ENCODE measurements at regions of chr12 and their contacts with region 1.

Region 1: DNA sequence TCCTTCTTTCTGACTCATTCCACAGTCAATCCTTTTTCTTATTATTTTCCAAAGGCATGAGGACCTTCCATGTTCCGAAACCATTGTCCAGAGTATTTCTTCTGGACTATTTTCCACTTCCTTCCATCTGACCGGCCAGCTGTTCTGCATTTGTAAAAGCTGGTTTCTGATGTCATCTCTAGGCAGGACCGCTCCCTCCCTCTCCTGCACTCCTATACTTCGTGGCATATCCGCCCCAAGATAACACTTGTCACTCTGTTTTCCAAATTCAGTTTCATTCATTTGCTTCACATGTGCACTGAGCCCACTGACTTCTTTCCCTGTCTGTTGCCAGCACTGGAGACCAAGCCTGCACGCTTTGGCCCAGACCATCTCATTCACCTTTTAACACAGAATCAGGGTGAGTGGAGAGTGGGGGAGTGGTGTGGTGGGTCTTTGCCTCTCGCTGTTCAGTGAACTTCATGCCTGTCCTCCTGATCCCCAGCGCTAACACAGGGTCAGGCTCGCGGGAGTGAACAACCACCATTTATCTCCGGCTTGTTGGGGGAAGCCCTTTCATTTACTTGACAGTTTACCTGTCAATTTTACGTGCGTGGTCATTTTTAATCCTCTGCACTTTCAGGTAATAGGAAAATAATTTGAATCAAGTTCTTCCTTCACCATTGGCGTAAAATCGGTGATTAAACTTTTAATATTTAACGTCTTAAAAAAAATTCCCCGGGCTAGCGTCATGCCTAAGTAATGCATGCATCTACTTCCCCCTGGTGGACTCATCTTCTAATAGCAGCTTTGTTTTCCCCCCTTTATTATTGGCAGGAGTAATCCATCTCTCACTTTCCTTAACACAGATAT is 52.5 kb downstream of the C12orf75 start:
- DNase-seq: peak in 4 of 5 donors; percentile 49 to 56 (median 54)
- H3K4me3 ChIP-seq: no peak overlapping the region
- H3K4me3 Mint-ChIP-seq: peak overlapping the region in 1 of 8 donors; percentile 6
- H3K27ac ChIP-seq: no peak overlapping the region
- H3K27ac Mint-ChIP-seq: no peak overlapping the region
- H3K4me1 ChIP-seq: peaks cover 4% of the 10 kb centered on the region
- H3K4me1 Mint-ChIP-seq: no peaks in the 10 kb centered on the region
- H3K27me3 ChIP-seq: no peaks in the 10 kb centered on the region
- H3K27me3 Mint-ChIP-seq: no peaks in the 10 kb centered on the region

Region 2: GRCh38 chr12:105157606-105158005 is 225.4 kb before region 1 on chr12:
- CTCF ChIA-PET with region 1: no interaction called
- POLR2A ChIA-PET with region 1: no interaction called
- intact Hi-C with region 1: loop called (anchors 2 kb)
- DNase-seq: no peak
- H3K4me3 ChIP-seq: no peak overlapping the region
- H3K4me3 Mint-ChIP-seq: no peak overlapping the region
- H3K27ac ChIP-seq: no peak overlapping the region
- H3K27ac Mint-ChIP-seq: peak overlapping the region in 2 of 7 donors; percentile 22 to 32
- H3K4me1 ChIP-seq: no peaks in the 10 kb centered on the region
- H3K4me1 Mint-ChIP-seq: peaks cover 0 to 8% (median 2%) of the 10 kb centered on the region in 4 donors
- H3K27me3 ChIP-seq: no peaks in the 10 kb centered on the region
- H3K27me3 Mint-ChIP-seq: no peaks in the 10 kb centered on the region

Region 3: DNA sequence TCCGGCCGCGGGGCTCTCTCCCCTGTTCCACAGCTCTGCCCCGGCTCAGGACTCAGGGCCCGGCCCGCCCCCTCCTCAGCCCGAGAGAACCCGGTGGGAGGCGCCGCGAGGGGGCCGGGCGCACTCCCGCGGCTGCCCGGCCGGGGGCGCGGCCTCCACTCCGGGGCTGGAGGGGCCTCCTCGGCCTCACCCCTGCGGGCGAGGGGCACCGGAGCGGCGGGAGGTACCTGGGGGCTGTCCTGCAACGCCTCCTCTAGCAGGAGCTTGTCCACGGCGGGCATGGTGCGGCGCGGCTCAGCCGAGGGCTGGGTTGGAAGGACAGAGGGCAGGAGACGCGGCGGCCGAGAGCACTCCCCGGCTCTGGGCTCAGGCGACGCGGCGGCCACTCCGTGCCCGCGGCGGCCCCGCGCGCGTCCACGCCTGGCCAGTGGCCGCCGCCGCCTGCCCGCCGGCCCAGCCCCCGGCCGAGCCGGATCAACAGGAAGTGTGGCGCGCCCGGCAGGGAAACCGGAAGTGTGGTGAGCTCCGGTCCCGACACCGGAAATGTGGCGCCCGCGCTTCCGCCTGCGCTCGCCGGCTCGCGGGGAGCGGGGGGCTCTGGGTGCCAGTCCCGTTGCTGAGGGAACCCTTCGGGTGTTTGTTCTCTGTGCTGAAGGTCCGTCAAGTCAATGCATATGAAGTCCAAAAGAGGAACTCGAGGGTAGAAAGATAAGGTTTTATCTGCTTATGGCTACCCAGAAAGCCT is 147.1 kb before region 1 on chr12 and contains the start of gene APPL2:
- CTCF ChIA-PET with region 1: interaction called, 3 read pairs
- POLR2A ChIA-PET with region 1: interaction called, 3 read pairs
- intact Hi-C with region 1: loop called (anchors 1 kb)
- DNase-seq: peak; percentile 61 to 73 (median 69)
- H3K4me3 ChIP-seq: peak within 1 kb of the TSS; percentile 63 to 74
- H3K4me3 Mint-ChIP-seq: peak within 1 kb of the TSS; percentile 90 to 97 (median 94)
- H3K27ac ChIP-seq: peak within 1 kb of the TSS; percentile 56
- H3K27ac Mint-ChIP-seq: peak within 1 kb of the TSS; percentile 90 to 98 (median 92)
- H3K4me1 ChIP-seq: peaks cover 39% of the 10 kb centered on the region
- H3K4me1 Mint-ChIP-seq: peaks cover 32 to 45% (median 38%) of the 10 kb centered on the region in 4 donors
- H3K27me3 ChIP-seq: no peaks in the 10 kb centered on the region
- H3K27me3 Mint-ChIP-seq: no peaks in the 10 kb centered on the region
- total RNA-seq, gene APPL2: 56.0 to 61.0 TPM

Region 4: GRCh38 chr12:105279460-105280056 is 103.4 kb before region 1 on chr12:
- CTCF ChIA-PET with region 1: interaction called, 9 read pairs
- POLR2A ChIA-PET with region 1: no interaction called
- intact Hi-C with region 1: loop called (anchors 1 kb)
- DNase-seq: peak; percentile 9 to 41 (median 36)
- H3K4me3 ChIP-seq: no peak overlapping the region
- H3K4me3 Mint-ChIP-seq: peak overlapping the region in 1 of 8 donors; percentile 53
- H3K27ac ChIP-seq: no peak overlapping the region
- H3K27ac Mint-ChIP-seq: no peak overlapping the region
- H3K4me1 ChIP-seq: no peaks in the 10 kb centered on the region
- H3K4me1 Mint-ChIP-seq: peaks cover 0 to 2% (median 0%) of the 10 kb centered on the region in 4 donors
- H3K27me3 ChIP-seq: no peaks in the 10 kb centered on the region
- H3K27me3 Mint-ChIP-seq: peaks cover 13% of the 10 kb centered on the region in 2 donors

Region 5: DNA sequence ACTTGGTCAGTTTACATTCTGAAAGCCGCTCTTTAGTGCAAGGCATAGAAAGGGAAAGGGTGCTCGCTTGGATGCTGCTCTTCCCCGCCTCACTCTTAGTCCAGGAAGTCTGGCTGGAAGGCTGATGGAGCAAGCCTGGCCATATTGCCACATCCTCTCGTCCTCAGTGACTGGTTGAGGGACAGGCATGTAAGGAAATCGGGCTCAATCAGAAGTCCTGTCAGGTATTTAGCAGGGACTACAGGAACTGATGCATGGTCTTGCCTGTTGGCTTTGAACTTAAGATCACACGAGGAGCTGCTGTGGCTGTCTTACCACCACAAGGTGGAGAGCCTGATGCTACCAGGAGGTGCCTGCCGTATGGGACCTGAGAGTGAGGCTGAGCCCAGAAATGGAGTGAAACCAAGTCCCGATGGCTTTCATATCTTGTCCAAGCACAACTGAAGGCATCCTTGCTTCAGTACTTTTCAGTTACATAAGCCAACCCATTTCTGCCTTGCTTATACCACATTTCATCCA is 63.2 kb before region 1 on chr12:
- CTCF ChIA-PET with region 1: interaction called, 14 read pairs
- POLR2A ChIA-PET with region 1: no interaction called
- intact Hi-C with region 1: loop called (anchors 2 kb)
- DNase-seq: peak in 1 of 5 donors; percentile 11
- H3K4me3 ChIP-seq: no peak overlapping the region
- H3K4me3 Mint-ChIP-seq: no peak overlapping the region
- H3K27ac ChIP-seq: no peak overlapping the region
- H3K27ac Mint-ChIP-seq: no peak overlapping the region
- H3K4me1 ChIP-seq: peaks cover 13% of the 10 kb centered on the region
- H3K4me1 Mint-ChIP-seq: peaks cover 10 to 16% (median 13%) of the 10 kb centered on the region in 4 donors
- H3K27me3 ChIP-seq: no peaks in the 10 kb centered on the region
- H3K27me3 Mint-ChIP-seq: no peaks in the 10 kb centered on the region

Measured in CD4-positive, alpha-beta memory T cell (primary cell).